ENCODE measurements at regions of chr1 and their contacts with region 1.

Region 1: DNA sequence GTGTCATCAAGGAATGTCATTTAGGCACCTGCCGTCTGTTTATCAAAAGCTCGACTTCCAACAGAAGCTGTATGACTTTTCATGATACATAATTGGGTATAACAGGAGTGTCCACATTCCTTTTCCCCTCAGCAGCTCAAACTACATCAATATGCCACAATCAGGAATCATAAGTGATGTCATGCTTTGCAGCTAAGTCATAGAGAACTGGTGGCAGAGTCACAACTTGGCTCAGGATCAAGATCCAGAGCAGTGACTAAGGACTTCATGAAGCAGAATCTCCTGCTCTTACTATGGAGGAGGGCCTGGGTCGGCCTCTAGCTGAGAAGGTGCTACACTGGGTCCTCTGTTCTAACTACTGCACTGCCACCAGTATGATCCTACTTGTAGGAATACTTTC is 36.5 kb upstream of the AGBL4 start:
- DNase-seq: no peak
- ATAC-seq: no peak

Region 2: GRCh38 chr1:50208315-50208714 is 148.0 kb after region 1 on chr1:
- intact Hi-C with region 1: no loop called
- DNase-seq: no peak
- ATAC-seq: no peak

Region 3: DNA sequence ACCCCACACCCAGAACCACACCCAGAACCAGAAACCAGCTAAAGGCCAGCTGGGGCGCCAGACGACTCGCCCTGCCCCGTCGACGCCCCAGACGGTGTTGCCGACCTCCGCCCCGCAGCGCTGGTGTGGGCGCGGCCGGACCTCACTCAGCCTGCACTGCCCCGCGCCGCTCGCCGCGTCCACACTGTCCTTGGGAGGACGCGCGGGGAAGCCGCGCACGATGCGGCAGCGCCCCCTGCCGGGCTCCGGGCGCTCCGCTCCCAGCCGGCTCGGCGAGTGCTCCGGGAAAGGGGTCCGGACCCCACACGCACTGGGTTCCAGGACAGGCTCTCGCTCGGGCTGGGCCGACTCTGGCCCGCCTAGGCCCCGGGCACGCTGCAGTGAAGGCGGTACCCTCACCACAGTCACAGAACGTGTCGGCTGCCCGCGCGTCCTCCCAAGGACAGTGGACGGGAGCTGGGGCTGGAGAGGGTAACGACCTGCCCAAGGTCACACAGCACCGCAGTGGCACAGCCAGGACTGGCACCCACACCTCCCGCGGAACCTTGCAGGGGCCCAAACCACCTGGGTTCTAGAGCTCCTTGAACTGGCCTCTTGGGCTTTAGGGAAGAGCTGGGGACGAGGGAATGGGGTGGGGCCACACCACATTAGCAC is 272.8 kb after region 1 on chr1:
- intact Hi-C with region 1: loop called (anchors 5 kb)
- DNase-seq: peak; percentile 82
- ATAC-seq: peak; percentile 93

Measured in Right ventricle myocardium inferior (tissue), 1 donor.